ENCODE measurements at regions of chr2 and their contacts with region 1.

Region 1: DNA sequence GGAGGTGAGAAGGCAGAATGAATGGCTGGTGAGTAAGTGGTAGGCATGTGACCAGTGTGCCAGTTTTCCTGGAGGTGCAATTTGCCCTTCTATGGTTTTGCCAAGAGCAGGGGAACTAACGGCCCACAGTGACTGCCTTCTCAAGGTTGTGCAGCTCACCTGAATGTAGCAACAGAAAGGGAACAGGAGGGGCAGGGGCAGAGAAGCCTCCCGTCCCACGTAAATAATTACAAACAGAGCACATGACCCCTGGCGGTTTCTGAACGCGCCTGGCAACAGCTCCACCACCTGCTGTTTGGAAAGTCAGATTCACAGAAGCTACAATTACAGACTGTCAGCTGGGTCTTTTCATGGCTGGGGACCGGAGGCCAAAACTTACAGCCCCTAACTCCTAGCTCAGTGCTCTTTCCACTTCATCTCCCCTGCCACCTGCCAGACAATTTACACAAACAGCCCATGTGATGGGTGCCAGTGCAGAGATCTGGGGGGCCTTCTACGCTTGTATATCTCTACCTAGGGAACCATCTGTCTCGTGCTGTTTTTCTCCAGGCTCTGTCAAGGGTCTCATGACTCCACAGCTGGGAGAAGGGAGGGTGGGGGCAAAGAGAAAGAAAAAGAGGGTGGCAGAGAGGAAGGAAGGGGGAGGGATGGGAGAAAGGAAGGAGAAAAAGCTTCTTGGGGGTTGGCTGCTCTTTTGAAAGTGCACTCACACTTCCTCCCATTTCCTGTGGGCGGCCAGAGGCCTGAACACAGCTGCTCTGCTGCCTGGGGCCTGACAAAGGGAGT is 69.6 kb downstream of the POLR1A start:
- DNase-seq: no peak
- H3K4me3 ChIP-seq: no peak overlapping the region
- H3K27ac ChIP-seq: no peak overlapping the region
- H3K4me1 ChIP-seq: no peaks in the 10 kb centered on the region; a peak in 1 of 7 replicates
- H3K27me3 ChIP-seq: no peaks in the 10 kb centered on the region
- CTCF ChIP-seq: no peak
- EP300 ChIP-seq: no peak
- POLR2A ChIP-seq: no peak
- RAD21 ChIP-seq: peak in 1 of 2 experiments; percentile 4; a peak in 1 of 4 replicates

Region 2: DNA sequence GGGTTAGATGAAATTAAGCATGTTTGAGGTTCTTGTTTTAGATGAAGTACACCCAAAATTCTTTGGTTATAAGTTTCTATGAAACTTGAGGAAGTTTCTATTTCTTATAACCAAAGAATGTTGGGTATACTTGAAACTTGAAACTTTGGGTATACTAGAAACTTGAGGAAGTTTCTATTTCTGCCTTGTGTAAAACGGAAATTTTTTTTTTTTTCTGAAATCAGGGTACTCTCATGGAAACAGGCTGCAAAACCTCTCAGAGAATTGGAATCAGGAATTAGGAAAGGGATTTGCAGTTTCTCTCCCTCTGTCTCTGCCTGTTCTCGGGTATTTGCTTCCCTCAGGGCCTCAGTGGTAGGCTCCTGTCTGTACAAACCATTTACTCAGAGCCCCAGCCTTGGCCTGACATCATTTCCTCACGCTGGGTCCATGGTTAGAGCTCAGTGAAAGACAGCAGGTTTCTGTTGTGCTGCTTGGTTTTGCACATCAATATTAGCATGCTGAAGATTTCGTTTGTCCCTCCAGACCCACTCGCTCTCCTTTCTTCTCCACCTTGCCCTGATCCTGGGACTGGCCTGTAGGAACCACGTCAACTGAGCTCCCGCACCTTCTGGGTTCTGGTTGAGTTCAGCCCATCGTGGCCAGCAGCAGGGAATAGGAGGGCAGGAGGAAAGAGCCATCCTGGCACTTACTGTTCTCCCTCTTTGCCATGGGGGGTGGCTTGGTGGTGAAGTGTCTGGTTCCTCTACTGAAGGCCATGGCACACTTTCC is 36.8 kb before region 1 on chr2:
- CTCF ChIA-PET with region 1: no interaction called
- POLR2A ChIA-PET with region 1: no interaction called
- DNase-seq: no peak
- H3K4me3 ChIP-seq: no peak overlapping the region
- H3K27ac ChIP-seq: no peak overlapping the region
- H3K4me1 ChIP-seq: peaks cover 0 to 4% (median 2%) of the 10 kb centered on the region in 4 experiments; a peak in 3 of 7 replicates
- H3K27me3 ChIP-seq: no peaks in the 10 kb centered on the region
- CTCF ChIP-seq: no peak
- EP300 ChIP-seq: no peak
- POLR2A ChIP-seq: no peak
- RAD21 ChIP-seq: no peak

Region 3: DNA sequence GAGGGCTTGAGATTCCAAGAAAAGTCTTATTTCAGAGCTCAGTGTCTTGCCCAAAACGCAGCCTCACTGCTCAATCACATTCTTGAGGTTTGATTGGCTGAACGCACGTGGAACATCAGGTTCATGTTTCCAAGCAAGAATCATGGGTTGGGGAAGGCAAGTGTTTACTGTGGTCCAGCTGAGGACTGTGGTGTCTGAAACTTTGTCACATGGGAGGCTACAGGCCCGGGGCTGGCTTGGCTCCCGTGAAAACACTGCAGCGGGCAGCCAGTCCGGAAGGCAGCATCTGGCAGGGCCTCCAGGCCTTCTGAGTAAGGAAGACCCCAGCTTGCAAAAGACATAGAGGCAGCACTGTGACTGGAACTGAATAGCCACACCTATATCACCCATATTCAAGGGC is 15.1 kb before region 1 on chr2:
- CTCF ChIA-PET with region 1: interaction called, 12 read pairs
- POLR2A ChIA-PET with region 1: interaction called, 4 read pairs
- DNase-seq: no peak
- H3K4me3 ChIP-seq: no peak overlapping the region
- H3K27ac ChIP-seq: no peak overlapping the region
- H3K4me1 ChIP-seq: no peaks in the 10 kb centered on the region
- H3K27me3 ChIP-seq: no peaks in the 10 kb centered on the region; a peak in 1 of 7 replicates
- CTCF ChIP-seq: no peak
- EP300 ChIP-seq: no peak
- POLR2A ChIP-seq: no peak; a peak in 1 of 3 replicates
- RAD21 ChIP-seq: no peak

Region 4: DNA sequence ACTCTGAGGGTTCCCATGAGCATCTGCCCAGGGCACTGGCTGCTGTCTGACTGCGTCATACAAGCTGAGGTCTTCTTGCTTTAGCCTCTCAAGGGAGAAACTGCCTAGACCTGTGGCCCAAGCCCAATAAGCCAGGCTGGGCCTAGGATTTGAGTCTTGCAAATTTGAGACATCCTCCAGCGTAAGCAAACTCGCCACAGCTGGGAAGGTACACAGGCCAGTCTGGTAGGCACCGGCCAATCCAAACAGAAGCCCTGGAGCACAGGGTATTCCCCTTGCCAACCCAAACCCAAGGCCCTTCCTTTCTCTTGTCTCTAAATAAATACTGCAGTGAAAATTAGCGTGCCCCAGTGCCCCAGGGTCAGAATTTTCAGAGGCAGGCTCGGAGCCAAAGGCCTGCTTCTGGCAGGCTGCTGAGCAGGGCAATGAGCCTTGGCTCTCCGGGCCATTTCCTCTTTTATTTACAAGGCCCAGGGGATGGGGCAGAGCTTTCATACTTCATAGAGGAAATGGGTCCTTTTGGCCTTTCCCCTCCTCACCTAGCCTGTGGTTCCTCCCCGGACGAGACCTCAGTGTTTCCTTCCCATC is 36.3 kb after region 1 on chr2:
- CTCF ChIA-PET with region 1: no interaction called
- POLR2A ChIA-PET with region 1: no interaction called
- DNase-seq: no peak
- H3K4me3 ChIP-seq: no peak overlapping the region
- H3K27ac ChIP-seq: no peak overlapping the region
- H3K4me1 ChIP-seq: no peaks in the 10 kb centered on the region
- H3K27me3 ChIP-seq: no peaks in the 10 kb centered on the region
- CTCF ChIP-seq: no peak
- EP300 ChIP-seq: no peak
- POLR2A ChIP-seq: no peak
- RAD21 ChIP-seq: no peak

Measured in H1 (cell line).